ENCODE measurements at regions of chr12 and their contacts with region 1.

Region 1: GRCh38 chr12:94762259-94762942 is 112.0 kb upstream of the TMCC3 start:
- DNase-seq: no peak
- ATAC-seq: no peak
- H3K4me3 ChIP-seq: no peak overlapping the region
- H3K27ac ChIP-seq: no peak overlapping the region
- H3K4me1 ChIP-seq: no peaks in the 10 kb centered on the region
- H3K27me3 ChIP-seq: peaks cover 5% of the 10 kb centered on the region
- CTCF ChIP-seq: no peak
- POLR2A ChIP-seq: no peak
- RAD21 ChIP-seq: no peak

Region 2: GRCh38 chr12:94133964-94134795 is 628.2 kb before region 1 on chr12:
- CTCF ChIA-PET with region 1: no interaction called
- POLR2A ChIA-PET with region 1: no interaction called
- dilution Hi-C with region 1: no loop called
- in situ Hi-C with region 1: loop called (anchors 25 kb)
- intact Hi-C with region 1: no loop called
- DNase-seq: peak; percentile 62
- ATAC-seq: peak; percentile 87
- H3K4me3 ChIP-seq: no peak overlapping the region
- H3K27ac ChIP-seq: no peak overlapping the region
- H3K4me1 ChIP-seq: no peaks in the 10 kb centered on the region
- H3K27me3 ChIP-seq: peaks cover 20% of the 10 kb centered on the region
- CTCF ChIP-seq: peak; percentile 78
- POLR2A ChIP-seq: no peak
- RAD21 ChIP-seq: peak; percentile 81

Region 3: DNA sequence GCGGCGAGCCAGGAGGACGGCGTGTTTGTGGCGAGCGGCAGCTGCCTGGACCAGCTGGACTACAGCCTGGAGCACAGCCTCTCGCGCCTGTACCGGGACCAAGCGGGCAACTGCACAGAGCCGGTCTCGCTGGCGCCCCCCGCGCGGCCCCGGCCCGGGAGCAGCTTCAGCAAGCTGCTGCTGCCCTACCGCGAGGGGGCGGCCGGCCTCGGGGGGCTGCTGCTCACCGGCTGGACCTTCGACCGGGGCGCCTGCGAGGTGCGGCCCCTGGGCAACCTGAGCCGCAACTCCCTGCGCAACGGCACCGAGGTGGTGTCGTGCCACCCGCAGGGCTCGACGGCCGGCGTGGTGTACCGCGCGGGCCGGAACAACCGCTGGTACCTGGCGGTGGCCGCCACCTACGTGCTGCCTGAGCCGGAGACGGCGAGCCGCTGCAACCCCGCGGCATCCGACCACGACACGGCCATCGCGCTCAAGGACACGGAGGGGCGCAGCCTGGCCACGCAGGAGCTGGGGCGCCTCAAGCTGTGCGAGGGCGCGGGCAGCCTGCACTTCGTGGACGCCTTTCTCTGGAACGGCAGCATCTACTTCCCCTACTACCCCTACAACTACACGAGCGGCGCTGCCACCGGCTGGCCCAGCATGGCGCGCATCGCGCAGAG is 613.2 kb before region 1 on chr12:
- CTCF ChIA-PET with region 1: no interaction called
- POLR2A ChIA-PET with region 1: no interaction called
- dilution Hi-C with region 1: no loop called
- in situ Hi-C with region 1: loop called (anchors 25 kb)
- intact Hi-C with region 1: loop called (anchors 10 kb)
- DNase-seq: peak; percentile 23
- ATAC-seq: peak; percentile 64
- H3K4me3 ChIP-seq: peak overlapping the region; percentile 67
- H3K27ac ChIP-seq: no peak overlapping the region
- H3K4me1 ChIP-seq: no peaks in the 10 kb centered on the region; the same call in none of the 2 replicates
- H3K27me3 ChIP-seq: peaks cover 88% of the 10 kb centered on the region
- CTCF ChIP-seq: 0 out of 2 replicates have a peak, but pooled peaks have one; percentile 18
- POLR2A ChIP-seq: no peak
- RAD21 ChIP-seq: no peak

Region 4: GRCh38 chr12:94545935-94546771 is 216.2 kb before region 1 on chr12:
- CTCF ChIA-PET with region 1: no interaction called
- POLR2A ChIA-PET with region 1: no interaction called
- dilution Hi-C with region 1: no loop called
- in situ Hi-C with region 1: no loop called
- intact Hi-C with region 1: loop called (anchors 2 kb)
- DNase-seq: peak; percentile 68
- ATAC-seq: peak; percentile 98
- H3K4me3 ChIP-seq: no peak overlapping the region
- H3K27ac ChIP-seq: no peak overlapping the region
- H3K4me1 ChIP-seq: no peaks in the 10 kb centered on the region
- H3K27me3 ChIP-seq: peaks cover 8% of the 10 kb centered on the region
- CTCF ChIP-seq: peak; percentile 76
- POLR2A ChIP-seq: no peak
- RAD21 ChIP-seq: peak; percentile 89

Region 5: DNA sequence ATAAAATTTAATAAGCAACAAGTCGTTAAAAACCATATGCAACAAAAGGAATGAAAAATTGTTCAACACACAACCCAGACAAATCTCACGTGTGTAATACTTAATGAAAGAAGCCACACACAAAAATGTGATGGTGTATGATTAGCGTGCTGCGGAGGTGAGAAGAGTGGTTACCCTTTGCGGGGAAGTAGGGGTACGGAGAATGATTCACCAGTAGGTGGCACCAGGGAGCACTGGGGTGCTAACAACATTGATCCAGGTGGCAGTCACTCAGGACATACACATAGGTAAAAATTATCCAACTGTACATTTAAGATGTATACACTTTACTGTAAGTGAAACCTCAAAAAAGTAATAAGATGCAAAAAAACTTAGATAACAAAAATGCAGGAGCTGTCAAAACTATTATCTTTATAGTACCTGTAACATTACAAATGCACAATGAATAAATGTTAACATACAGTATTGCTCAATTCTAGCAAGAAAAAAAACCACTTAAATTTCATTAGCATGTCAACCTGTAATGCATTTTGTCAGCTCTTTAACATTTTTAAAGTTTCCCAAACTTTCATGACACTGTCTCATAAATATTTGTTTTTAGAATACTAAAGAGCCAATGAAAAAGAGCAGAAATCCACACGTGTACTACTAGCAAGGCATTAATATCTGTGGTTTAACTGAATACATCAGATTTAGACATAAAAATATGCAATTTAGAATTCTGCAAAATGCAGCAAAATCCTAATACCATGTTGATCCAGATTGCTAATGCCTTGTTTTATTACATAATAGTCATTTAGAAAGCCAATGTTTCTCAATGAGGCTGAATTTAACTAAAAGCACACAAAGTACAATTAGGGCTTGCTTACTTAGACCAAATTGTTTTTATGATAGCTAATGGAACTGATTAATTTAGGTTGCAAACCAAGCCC is 158.7 kb before region 1 on chr12:
- CTCF ChIA-PET with region 1: no interaction called
- POLR2A ChIA-PET with region 1: no interaction called
- dilution Hi-C with region 1: no loop called
- in situ Hi-C with region 1: no loop called
- intact Hi-C with region 1: loop called (anchors 5 kb)
- DNase-seq: no peak
- ATAC-seq: no peak
- H3K4me3 ChIP-seq: no peak overlapping the region
- H3K27ac ChIP-seq: no peak overlapping the region
- H3K4me1 ChIP-seq: no peaks in the 10 kb centered on the region
- H3K27me3 ChIP-seq: peaks cover 9% of the 10 kb centered on the region
- CTCF ChIP-seq: peak; percentile 48
- POLR2A ChIP-seq: no peak
- RAD21 ChIP-seq: peak; percentile 39

Region 6: GRCh38 chr12:94909663-94910062 is 147.3 kb after region 1 on chr12:
- CTCF ChIA-PET with region 1: no interaction called
- POLR2A ChIA-PET with region 1: no interaction called
- dilution Hi-C with region 1: no loop called
- in situ Hi-C with region 1: no loop called
- intact Hi-C with region 1: no loop called
- DNase-seq: no peak
- ATAC-seq: no peak
- H3K4me3 ChIP-seq: no peak overlapping the region
- H3K27ac ChIP-seq: no peak overlapping the region
- H3K4me1 ChIP-seq: no peaks in the 10 kb centered on the region
- H3K27me3 ChIP-seq: peaks cover 3% of the 10 kb centered on the region
- CTCF ChIP-seq: no peak
- POLR2A ChIP-seq: no peak
- RAD21 ChIP-seq: no peak

Region 7: GRCh38 chr12:95083938-95084337 is 321.5 kb after region 1 on chr12:
- CTCF ChIA-PET with region 1: no interaction called
- POLR2A ChIA-PET with region 1: no interaction called
- dilution Hi-C with region 1: no loop called
- in situ Hi-C with region 1: no loop called
- intact Hi-C with region 1: no loop called
- DNase-seq: peak; percentile 89
- ATAC-seq: peak; percentile 96
- H3K4me3 ChIP-seq: no peak overlapping the region
- H3K27ac ChIP-seq: peak overlapping the region; percentile 28; the same call in 1 of the 2 replicates
- H3K4me1 ChIP-seq: no peaks in the 10 kb centered on the region; the same call in 1 of the 2 replicates
- H3K27me3 ChIP-seq: no peaks in the 10 kb centered on the region
- CTCF ChIP-seq: no peak
- POLR2A ChIP-seq: no peak
- RAD21 ChIP-seq: no peak